Breast epithelium (tissue), 4 donors: ENCODE measurements at regions of chr4 and their contacts with region 1.

Region 1: DNA sequence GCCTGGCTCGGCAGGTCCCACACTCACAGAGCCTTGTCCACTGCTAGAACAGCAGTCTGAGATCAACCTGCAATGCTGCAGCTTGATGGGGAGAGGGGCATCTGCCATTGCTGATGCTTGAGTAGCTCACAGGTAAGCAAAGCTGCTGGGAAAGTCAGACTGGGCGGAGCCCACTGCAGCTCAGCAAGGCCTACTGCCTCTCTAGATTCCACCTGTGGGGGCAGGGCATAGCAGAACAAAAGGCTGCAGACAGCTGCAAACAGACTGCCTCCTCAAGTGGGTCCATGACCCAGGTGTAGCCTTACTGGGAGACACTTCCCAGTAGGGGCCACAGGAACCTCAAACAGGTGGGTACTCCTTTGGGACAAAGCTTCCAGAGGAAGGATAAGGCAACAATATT is 110.6 kb upstream of the ADAMTS3 start:
- DNase-seq: no peak
- H3K4me3 ChIP-seq: no peak overlapping the region
- H3K27ac ChIP-seq: no peak overlapping the region
- H3K4me1 ChIP-seq: no peaks in the 10 kb centered on the region
- H3K27me3 ChIP-seq: no peaks in the 10 kb centered on the region
- CTCF ChIP-seq: no peak
- POLR2A ChIP-seq: no peak

Region 2: GRCh38 chr4:72410158-72410557 is 269.5 kb before region 1 on chr4:
- intact Hi-C with region 1: loop called (anchors 5 kb)
- DNase-seq: peak in 1 of 2 donors; percentile 22
- H3K4me3 ChIP-seq: no peak overlapping the region
- H3K27ac ChIP-seq: peak overlapping the region in 1 of 2 donors; percentile 16
- H3K4me1 ChIP-seq: no peaks in the 10 kb centered on the region
- H3K27me3 ChIP-seq: no peaks in the 10 kb centered on the region
- CTCF ChIP-seq: no peak
- POLR2A ChIP-seq: no peak